HepG2 (cell line): ENCODE measurements at regions of chr12 and their contacts with region 1.

Region 1: GRCh38 chr12:114508529-114509129 is 102.7 kb upstream of the TBX5 start:
- DNase-seq: peak; percentile 71
- ATAC-seq: peak; percentile 73
- H3K4me3 ChIP-seq: no peak overlapping the region
- H3K27ac ChIP-seq: no peak overlapping the region
- H3K4me1 ChIP-seq: no peaks in the 10 kb centered on the region
- H3K27me3 ChIP-seq: peaks cover 0 to 12% of the 10 kb centered on the region in 2 experiments; a peak in 1 of 5 replicates
- CTCF ChIP-seq: peak; percentile 85
- EP300 ChIP-seq: no peak
- POLR2A ChIP-seq: no peak
- RAD21 ChIP-seq: peak; percentile 53; the same call in 1 of the 2 replicates

Region 2: DNA sequence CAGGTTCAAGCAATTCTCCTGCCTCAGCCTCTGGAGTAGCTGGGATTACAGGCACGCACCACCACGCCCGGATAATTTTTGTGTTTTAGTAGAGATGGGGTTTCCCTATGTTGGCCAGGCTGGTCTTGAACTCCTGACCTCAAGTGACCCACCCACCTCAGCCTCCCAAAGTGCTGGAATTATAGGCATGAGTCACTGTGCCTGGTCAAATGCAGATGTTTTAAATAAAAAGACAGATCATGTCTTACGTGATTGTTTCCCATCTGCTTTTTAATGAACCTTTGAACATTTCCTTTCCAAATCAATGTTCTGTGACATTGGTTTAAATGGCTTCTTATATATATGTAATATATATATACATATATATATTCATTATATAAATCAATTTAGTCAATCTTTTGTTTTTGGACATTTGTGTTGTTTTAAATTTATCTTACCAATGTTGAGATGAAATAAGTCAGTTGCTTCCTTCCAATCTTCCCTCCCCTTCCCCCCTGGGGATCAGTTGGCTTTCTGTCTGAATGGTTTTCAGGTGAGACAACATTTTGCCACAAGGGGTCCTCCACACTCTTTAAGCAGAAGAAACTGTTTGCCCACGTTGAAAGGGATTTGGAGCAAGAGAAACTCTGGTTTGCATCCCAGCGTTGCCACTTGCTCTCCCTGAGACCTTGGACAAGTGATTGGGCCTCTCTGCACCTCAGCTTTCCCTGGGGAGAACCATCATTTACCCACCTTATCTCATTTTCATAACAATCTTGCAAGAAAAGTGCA is 494.9 kb before region 1 on chr12:
- CTCF ChIA-PET with region 1: interaction called, 9 read pairs
- POLR2A ChIA-PET with region 1: no interaction called
- in situ Hi-C with region 1: no loop called
- intact Hi-C with region 1: loop called (anchors 1 kb)
- DNase-seq: peak; percentile 39
- ATAC-seq: no peak
- H3K4me3 ChIP-seq: no peak overlapping the region
- H3K27ac ChIP-seq: no peak overlapping the region
- H3K4me1 ChIP-seq: no peaks in the 10 kb centered on the region
- H3K27me3 ChIP-seq: no peaks in the 10 kb centered on the region
- CTCF ChIP-seq: peak; percentile 65
- EP300 ChIP-seq: no peak
- POLR2A ChIP-seq: no peak
- RAD21 ChIP-seq: no peak

Region 3: DNA sequence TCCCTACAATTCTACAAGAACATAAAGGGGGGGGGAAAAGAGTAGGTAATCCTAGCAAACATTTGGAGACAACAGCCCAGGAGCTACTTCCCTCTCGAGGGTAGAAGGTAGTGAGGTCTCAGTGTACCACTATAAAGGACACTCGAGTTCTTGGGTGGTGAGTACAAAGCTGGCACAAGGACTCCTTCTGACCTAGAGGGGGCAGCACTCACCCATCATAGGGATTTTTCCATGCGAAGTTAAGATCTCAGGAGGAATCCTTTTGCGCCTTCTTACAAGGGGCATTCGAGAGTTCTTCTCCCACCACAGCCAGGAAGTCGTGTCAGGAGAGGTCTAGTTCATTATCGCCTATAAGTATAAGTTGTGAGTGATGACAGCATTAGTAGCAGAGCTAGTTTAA is 342.3 kb before region 1 on chr12:
- CTCF ChIA-PET with region 1: no interaction called
- POLR2A ChIA-PET with region 1: no interaction called
- in situ Hi-C with region 1: no loop called
- intact Hi-C with region 1: loop called (anchors 1 kb)
- DNase-seq: peak; percentile 9
- ATAC-seq: peak; percentile 64
- H3K4me3 ChIP-seq: no peak overlapping the region
- H3K27ac ChIP-seq: no peak overlapping the region
- H3K4me1 ChIP-seq: no peaks in the 10 kb centered on the region
- H3K27me3 ChIP-seq: no peaks in the 10 kb centered on the region; a peak in 2 of 5 replicates
- CTCF ChIP-seq: peak; percentile 60
- EP300 ChIP-seq: no peak
- POLR2A ChIP-seq: no peak
- RAD21 ChIP-seq: no peak

Region 4: DNA sequence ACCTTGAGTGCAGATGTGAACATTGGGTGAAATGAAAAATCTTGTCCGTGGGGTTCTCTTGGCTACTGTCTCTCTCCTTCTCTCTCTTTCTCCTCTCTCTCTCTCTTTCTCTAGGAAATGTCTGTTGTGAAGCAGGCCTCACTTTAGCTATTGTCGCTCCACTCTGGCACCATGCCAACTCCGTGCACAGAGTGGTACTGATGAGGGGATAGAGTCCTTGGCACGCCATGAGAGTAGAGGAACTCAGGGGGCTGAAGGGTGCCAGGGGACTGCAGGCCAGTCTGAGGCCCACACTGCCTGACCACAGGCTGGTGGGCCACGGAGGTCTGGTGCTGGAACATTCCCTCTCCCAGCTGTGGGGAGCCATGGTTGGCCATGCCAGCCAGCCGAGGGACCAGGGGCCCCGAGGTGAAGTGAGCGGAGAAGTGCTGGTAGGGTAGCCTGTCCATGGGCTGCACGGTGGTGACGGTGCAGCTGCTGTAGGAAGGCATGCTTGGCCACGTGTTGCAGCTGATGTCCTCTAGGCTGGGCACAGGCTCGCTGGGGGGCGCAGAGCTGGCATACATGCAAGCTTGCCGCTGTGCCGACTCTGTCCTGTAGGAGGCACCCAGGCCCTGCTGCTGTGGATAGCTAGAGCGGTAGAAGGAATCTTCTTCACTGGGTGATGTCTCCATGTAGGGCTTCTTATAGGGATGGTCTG is 153.1 kb before region 1 on chr12:
- CTCF ChIA-PET with region 1: no interaction called
- POLR2A ChIA-PET with region 1: no interaction called
- in situ Hi-C with region 1: no loop called
- intact Hi-C with region 1: loop called (anchors 5 kb)
- DNase-seq: peak; percentile 23
- ATAC-seq: peak; percentile 92
- H3K4me3 ChIP-seq: no peak overlapping the region
- H3K27ac ChIP-seq: no peak overlapping the region
- H3K4me1 ChIP-seq: no peaks in the 10 kb centered on the region
- H3K27me3 ChIP-seq: no peaks in the 10 kb centered on the region
- CTCF ChIP-seq: peak; percentile 52
- EP300 ChIP-seq: no peak
- POLR2A ChIP-seq: no peak
- RAD21 ChIP-seq: no peak

Region 5: DNA sequence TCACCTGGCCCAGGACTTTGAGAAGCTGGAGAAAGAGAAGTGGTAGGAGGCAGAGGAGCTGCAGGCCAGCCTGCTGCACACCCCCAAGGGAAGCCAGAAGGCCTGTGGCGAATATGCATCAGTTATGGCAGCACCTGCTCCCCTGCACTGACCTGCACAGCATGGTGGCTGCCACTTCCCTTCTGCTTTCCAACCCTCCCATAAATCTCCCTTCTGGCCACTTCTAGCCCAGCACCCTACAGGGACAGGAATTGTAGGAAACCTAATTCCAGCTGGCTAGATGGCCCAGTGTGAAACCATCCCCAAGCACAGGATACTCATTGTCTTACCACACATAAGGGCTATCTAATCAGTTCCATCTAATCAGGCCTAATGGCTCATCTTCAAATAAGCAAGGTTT is 39.0 kb after region 1 on chr12:
- CTCF ChIA-PET with region 1: no interaction called
- POLR2A ChIA-PET with region 1: no interaction called
- in situ Hi-C with region 1: no loop called
- intact Hi-C with region 1: no loop called
- DNase-seq: no peak
- ATAC-seq: no peak
- H3K4me3 ChIP-seq: no peak overlapping the region
- H3K27ac ChIP-seq: no peak overlapping the region
- H3K4me1 ChIP-seq: no peaks in the 10 kb centered on the region
- H3K27me3 ChIP-seq: peaks cover 0 to 1% of the 10 kb centered on the region in 2 experiments; a peak in 1 of 5 replicates
- CTCF ChIP-seq: no peak
- EP300 ChIP-seq: no peak
- POLR2A ChIP-seq: no peak
- RAD21 ChIP-seq: no peak

Region 6: GRCh38 chr12:114598111-114598510 is 89.5 kb after region 1 on chr12:
- CTCF ChIA-PET with region 1: no interaction called
- POLR2A ChIA-PET with region 1: no interaction called
- in situ Hi-C with region 1: no loop called
- intact Hi-C with region 1: no loop called
- DNase-seq: no peak
- ATAC-seq: no peak
- H3K4me3 ChIP-seq: no peak overlapping the region
- H3K27ac ChIP-seq: no peak overlapping the region
- H3K4me1 ChIP-seq: peaks cover 5% of the 10 kb centered on the region; the same call in 1 of the 2 replicates
- H3K27me3 ChIP-seq: no peaks in the 10 kb centered on the region
- CTCF ChIP-seq: no peak
- EP300 ChIP-seq: no peak
- POLR2A ChIP-seq: no peak
- RAD21 ChIP-seq: no peak